HepG2 (cell line): ENCODE measurements at regions of chr11 and their contacts with region 1.

Region 1: GRCh38 chr11:85627998-85628770 is at the start of gene TMEM126B:
- DNase-seq: peak; percentile 95
- ATAC-seq: peak; percentile 99
- H3K4me3 ChIP-seq: peak within 1 kb of the TSS; percentile 79 to 88 (median 81)
- H3K27ac ChIP-seq: peak within 1 kb of the TSS; percentile 79
- H3K4me1 ChIP-seq: peaks cover 27% of the 10 kb centered on the region
- H3K27me3 ChIP-seq: no peaks in the 10 kb centered on the region; a peak in 1 of 5 replicates
- CTCF ChIP-seq: no peak; the same call in 1 of the 2 replicates
- EP300 ChIP-seq: no peak
- POLR2A ChIP-seq: peak; percentile 87 to 93
- RAD21 ChIP-seq: no peak
- total RNA-seq, gene TMEM126B: 54.8 and 81.8 TPM in 2 replicates

Region 2: DNA sequence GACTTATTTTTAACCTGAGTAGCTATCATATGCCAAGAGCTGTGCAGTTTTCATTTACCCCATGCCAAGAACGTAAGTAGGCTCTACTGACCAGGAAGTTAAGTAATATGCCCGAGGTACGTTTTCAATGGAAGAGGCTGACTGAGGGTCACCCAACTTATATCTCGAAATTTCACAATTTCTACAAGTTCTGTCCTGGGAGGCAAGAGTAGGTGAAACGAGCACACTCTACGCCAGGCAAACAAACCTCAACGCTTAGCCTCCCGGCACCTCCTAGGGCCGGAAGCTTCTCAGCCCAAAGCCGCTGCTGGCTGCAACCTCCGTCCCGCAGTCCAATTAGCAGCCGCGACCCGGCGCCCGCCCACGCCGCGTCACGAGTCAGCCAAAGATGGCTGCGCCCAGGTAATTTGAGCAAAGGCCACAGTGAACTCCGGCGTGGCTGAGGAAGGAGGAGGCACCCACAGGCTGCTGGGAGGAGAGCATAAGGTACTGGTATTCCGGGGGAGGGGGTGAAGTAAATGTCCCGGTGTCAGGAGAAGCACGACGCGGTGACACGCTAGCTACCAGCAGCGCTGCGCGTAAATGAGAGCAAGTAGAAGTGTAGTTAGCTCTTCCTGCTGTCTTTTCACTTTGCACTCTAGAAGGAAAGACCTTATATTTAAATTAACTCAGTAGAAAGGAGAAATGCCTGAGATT is 19.6 kb after region 1 on chr11 and contains the start of gene TMEM126A:
- CTCF ChIA-PET with region 1: no interaction called
- POLR2A ChIA-PET with region 1: interaction called, 41 read pairs
- in situ Hi-C with region 1: no loop called
- intact Hi-C with region 1: loop called (anchors 1 kb)
- DNase-seq: peak; percentile 86
- ATAC-seq: peak; percentile 97
- H3K4me3 ChIP-seq: peak within 1 kb of the TSS; percentile 81 to 83 (median 82)
- H3K27ac ChIP-seq: peak within 1 kb of the TSS; percentile 77
- H3K4me1 ChIP-seq: peaks cover 18% of the 10 kb centered on the region
- H3K27me3 ChIP-seq: no peaks in the 10 kb centered on the region; a peak in 1 of 5 replicates
- CTCF ChIP-seq: no peak; the same call in 1 of the 2 replicates
- EP300 ChIP-seq: peak in 1 of 2 experiments; percentile 7; a peak in 1 of 4 replicates
- POLR2A ChIP-seq: peak; percentile 90
- RAD21 ChIP-seq: no peak
- total RNA-seq, gene TMEM126A: 66.9 and 68.7 TPM in 2 replicates

Region 3: DNA sequence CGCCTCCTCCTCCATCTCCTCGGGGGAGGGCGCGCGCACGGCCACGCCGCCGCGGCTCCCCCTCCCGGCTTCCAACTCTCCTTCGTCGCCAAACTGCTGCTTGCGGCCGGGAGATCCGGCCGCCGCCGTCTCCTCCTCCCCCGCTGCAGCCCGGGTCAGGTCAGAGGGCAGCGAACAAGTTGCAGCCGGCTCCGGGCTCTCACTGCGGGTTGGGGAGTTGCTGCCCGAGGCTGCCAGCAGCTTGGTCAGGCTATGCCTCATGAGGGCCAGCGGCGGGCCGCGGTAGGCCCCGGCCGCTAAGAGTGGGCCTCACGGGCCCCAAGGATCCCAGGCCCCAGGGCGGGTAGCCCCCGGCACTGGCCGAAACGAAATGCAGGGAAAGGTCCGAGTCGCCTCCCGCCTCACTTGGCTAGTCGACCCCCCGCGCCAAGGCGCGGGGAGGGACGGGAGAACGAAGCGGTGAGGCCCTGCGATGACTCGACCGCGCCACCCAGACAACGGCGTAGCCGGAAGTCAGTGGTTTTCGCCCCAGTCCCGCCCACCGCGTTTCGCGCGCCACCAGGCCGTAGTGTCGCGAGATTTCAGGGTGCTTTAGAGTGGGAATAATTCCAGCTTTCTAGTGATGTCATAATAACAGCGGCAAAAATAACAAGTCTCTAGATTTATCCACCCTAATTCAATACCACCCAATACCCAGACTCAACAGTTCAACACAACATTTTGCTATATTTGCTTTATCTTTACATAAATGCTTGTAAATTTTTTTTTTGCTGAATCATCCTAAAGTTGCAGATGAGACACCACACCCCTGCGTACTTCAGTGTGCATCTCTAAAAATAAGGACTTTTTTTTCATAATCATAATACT is 36.7 kb after region 1 on chr11 and contains the start of gene CREBZF:
- CTCF ChIA-PET with region 1: no interaction called
- POLR2A ChIA-PET with region 1: interaction called, 15 read pairs
- in situ Hi-C with region 1: no loop called
- intact Hi-C with region 1: loop called (anchors 1 kb)
- DNase-seq: peak; percentile 85
- ATAC-seq: peak; percentile 94
- H3K4me3 ChIP-seq: peak within 1 kb of the TSS; percentile 72 to 95 (median 86)
- H3K27ac ChIP-seq: peak within 1 kb of the TSS; percentile 98
- H3K4me1 ChIP-seq: peaks cover 40% of the 10 kb centered on the region
- H3K27me3 ChIP-seq: no peaks in the 10 kb centered on the region; a peak in 1 of 5 replicates
- CTCF ChIP-seq: peak; percentile 33; the same call in 1 of the 2 replicates
- EP300 ChIP-seq: no peak
- POLR2A ChIP-seq: peak; percentile 95 to 96
- RAD21 ChIP-seq: no peak; the same call in 1 of the 2 replicates
- total RNA-seq, gene CREBZF: 17.2 and 43.1 TPM in 2 replicates

Region 4: GRCh38 chr11:85685820-85686459 is 57.8 kb after region 1 on chr11 and contains the start of gene CCDC89:
- CTCF ChIA-PET with region 1: no interaction called
- POLR2A ChIA-PET with region 1: interaction called, 11 read pairs
- in situ Hi-C with region 1: no loop called
- intact Hi-C with region 1: no loop called
- DNase-seq: peak; percentile 68
- ATAC-seq: peak; percentile 86
- H3K4me3 ChIP-seq: peak within 1 kb of the TSS; percentile 20 to 69 (median 44); a peak in 5 of 6 replicates
- H3K27ac ChIP-seq: no peak within 1 kb of the TSS
- H3K4me1 ChIP-seq: peaks cover 33% of the 10 kb centered on the region; the same call in 1 of the 2 replicates
- H3K27me3 ChIP-seq: 0 out of 5 replicates have a peak, but pooled peaks cover 0 to 10% of the 10 kb centered on the region in 2 experiments
- CTCF ChIP-seq: no peak
- EP300 ChIP-seq: no peak
- POLR2A ChIP-seq: no peak
- RAD21 ChIP-seq: no peak
- total RNA-seq, gene CCDC89: 0.38 and 0.60 TPM in 2 replicates

Region 5: DNA sequence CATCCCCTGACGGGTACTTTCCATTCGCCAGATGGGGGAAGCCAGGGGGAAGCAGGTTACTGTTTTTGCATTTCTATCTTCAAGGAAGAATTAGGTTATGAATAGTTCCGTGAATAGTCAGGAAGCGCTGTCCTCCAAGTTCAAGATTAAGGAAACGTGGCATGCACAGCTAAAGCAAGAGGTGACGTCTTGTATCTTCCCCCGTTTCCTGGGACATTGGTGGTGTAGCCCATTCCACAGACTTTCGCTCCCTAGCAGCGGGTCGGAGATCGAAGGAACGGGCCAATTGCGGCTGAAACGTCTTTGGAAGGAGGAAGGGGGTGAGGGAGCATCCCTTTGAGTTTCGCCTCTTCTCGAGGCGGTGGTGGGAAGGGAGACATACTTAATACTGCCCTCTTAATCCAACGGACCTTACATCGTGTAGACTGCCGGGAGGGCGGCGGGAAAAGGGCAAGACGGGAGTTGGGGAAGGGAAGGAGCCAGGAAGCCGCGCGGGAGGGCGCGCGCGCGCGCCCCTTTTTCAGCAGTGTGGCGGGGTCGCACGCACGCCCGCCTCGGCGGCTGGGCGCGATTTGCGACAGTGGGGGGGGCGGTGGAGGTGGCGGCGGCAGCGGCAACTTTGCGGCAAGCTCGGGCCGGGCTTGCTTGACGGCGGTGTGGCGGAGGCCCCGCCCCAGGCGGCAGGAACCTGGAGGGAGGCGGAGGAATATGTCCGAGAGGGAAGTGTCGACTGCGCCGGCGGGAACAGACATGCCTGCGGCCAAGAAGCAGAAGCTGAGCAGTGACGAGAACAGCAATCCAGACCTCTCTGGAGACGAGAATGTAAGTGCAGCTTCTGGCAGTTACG is 616.6 kb after region 1 on chr11 and contains the start of gene EED:
- CTCF ChIA-PET with region 1: no interaction called
- POLR2A ChIA-PET with region 1: interaction called, 6 read pairs
- in situ Hi-C with region 1: no loop called
- intact Hi-C with region 1: loop called (anchors 1 kb)
- DNase-seq: peak; percentile 88
- ATAC-seq: peak; percentile 95
- H3K4me3 ChIP-seq: peak within 1 kb of the TSS; percentile 72 to 96 (median 95)
- H3K27ac ChIP-seq: peak within 1 kb of the TSS; percentile 98
- H3K4me1 ChIP-seq: peaks cover 50% of the 10 kb centered on the region
- H3K27me3 ChIP-seq: no peaks in the 10 kb centered on the region; a peak in 2 of 5 replicates
- CTCF ChIP-seq: 0 out of 2 replicates have a peak, but pooled peaks have one; percentile 2
- EP300 ChIP-seq: no peak
- POLR2A ChIP-seq: peak; percentile 85 to 86
- RAD21 ChIP-seq: no peak
- total RNA-seq, gene EED: 28.4 and 39.7 TPM in 2 replicates

Region 6: DNA sequence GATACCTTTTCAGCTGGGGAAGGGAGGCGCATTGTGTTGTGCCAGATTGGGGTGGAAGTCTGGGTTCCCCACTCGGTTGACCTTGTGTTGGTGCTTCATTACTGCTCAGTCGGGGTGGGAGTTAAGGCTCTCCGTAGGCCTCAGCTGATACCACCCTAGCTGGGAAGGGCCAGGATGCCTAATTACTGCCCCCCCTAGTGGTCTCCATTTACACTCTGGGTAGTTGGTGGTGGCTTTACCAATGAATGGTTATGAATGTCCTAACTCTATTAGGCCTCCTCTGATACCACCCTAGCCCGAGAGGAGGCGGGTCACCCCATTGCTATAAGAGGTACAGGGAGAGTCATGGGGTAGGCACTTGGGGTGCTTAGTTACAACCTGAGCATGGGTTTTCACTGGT is 646.3 kb after region 1 on chr11:
- CTCF ChIA-PET with region 1: no interaction called
- POLR2A ChIA-PET with region 1: no interaction called
- in situ Hi-C with region 1: loop called (anchors 25 kb)
- intact Hi-C with region 1: no loop called
- DNase-seq: peak; percentile 5
- ATAC-seq: peak; percentile 80
- H3K4me3 ChIP-seq: no peak overlapping the region
- H3K27ac ChIP-seq: no peak overlapping the region
- H3K4me1 ChIP-seq: peaks cover 8% of the 10 kb centered on the region; the same call in 1 of the 2 replicates
- H3K27me3 ChIP-seq: no peaks in the 10 kb centered on the region
- CTCF ChIP-seq: 0 out of 2 replicates have a peak, but pooled peaks have one; percentile 28
- EP300 ChIP-seq: no peak
- POLR2A ChIP-seq: no peak
- RAD21 ChIP-seq: no peak